ENCODE measurements at regions of chr2 and their contacts with region 1.

Region 1: GRCh38 chr2:69724540-69725159 is 17.3 kb upstream of the ANXA4 start:
- DNase-seq: peak; percentile 89 to 94
- ATAC-seq: peak; percentile 93
- H3K4me3 ChIP-seq: no peak overlapping the region
- H3K27ac ChIP-seq: no peak overlapping the region
- H3K4me1 ChIP-seq: no peaks in the 10 kb centered on the region
- H3K27me3 ChIP-seq: no peaks in the 10 kb centered on the region

Region 2: DNA sequence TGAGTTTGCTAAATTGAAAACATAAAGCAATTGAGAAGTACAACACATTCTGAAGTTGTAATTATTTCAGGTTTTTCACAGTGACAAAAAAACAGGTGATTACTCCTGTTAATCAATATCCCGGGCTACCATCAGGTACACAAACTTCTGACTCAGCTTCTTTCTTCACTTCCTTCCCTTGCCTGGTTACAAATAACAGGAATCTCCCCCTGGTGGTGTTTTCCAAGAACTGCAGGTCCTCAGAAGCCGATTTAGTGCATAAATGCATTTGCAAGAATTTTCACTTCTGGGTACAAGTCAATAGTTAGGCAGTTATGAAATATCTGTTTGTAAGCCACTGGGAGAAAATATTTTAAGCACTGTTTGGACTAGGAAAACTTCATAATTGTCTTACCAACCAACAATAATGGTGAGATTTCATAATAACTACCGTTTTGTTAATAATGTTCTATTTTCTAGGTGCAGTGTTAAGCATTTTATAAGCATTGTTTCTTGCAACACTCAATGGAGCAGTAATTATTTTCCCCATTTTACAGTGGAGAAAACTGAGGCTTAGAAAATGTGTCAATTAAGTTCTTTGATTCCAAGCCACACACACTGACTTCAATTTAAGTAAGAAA is 92.4 kb after region 1 on chr2:
- intact Hi-C with region 1: loop called (anchors 1 to 2 kb)
- DNase-seq: peak in 1 of 2 donors; percentile 74
- ATAC-seq: peak; percentile 84
- H3K4me3 ChIP-seq: no peak overlapping the region
- H3K27ac ChIP-seq: no peak overlapping the region
- H3K4me1 ChIP-seq: no peaks in the 10 kb centered on the region
- H3K27me3 ChIP-seq: no peaks in the 10 kb centered on the region

Measured in aorta (tissue), 5 donors.